Activated CD4-positive, alpha-beta memory T cell treated with anti-CD3 and anti-CD28 coated beads, Interleukin-2, amount 10 ng/mL, durations not matched to agents 7 days and 5 days (primary cell): ENCODE measurements at regions of chr6 and their contacts with region 1.

Region 1: DNA sequence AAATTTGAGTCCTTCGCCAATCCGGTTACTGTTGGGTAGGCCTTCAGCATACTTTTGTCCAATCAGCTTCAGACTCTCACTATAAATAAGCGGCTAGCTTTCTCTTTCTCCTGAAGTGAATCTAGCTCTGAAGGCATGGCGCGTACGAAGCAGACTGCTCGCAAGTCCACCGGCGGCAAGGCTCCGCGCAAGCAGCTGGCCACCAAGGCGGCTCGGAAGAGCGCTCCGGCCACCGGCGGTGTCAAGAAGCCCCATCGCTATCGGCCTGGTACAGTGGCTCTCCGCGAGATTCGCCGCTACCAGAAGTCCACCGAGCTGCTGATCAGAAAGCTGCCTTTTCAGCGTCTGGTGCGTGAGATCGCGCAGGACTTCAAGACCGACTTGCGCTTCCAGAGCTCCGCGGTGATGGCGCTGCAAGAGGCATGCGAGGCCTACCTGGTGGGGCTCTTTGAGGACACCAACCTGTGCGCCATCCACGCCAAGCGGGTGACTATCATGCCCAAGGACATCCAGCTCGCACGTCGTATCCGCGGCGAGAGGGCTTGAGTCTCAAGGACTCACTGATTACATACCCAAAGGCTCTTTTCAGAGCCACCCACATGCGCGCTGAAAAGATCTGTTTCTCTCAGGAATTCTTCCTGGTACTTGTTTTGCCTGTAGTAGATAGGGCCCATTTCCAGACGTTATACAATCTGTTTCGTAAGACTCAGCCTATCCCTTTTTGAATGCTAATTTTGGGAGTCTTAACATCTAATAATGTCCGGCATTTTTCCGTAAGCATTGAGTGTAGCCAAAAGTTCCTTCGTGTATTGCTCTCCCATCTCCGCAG is 102.0 kb downstream of the OR2B2 start:
- DNase-seq: peak; percentile 83
- H3K4me3 Mint-ChIP-seq: peak overlapping the region; percentile 85
- H3K27ac Mint-ChIP-seq: peak overlapping the region; percentile 99
- H3K4me1 Mint-ChIP-seq: peaks cover 62% of the 10 kb centered on the region
- H3K27me3 Mint-ChIP-seq: no peaks in the 10 kb centered on the region

Region 2: DNA sequence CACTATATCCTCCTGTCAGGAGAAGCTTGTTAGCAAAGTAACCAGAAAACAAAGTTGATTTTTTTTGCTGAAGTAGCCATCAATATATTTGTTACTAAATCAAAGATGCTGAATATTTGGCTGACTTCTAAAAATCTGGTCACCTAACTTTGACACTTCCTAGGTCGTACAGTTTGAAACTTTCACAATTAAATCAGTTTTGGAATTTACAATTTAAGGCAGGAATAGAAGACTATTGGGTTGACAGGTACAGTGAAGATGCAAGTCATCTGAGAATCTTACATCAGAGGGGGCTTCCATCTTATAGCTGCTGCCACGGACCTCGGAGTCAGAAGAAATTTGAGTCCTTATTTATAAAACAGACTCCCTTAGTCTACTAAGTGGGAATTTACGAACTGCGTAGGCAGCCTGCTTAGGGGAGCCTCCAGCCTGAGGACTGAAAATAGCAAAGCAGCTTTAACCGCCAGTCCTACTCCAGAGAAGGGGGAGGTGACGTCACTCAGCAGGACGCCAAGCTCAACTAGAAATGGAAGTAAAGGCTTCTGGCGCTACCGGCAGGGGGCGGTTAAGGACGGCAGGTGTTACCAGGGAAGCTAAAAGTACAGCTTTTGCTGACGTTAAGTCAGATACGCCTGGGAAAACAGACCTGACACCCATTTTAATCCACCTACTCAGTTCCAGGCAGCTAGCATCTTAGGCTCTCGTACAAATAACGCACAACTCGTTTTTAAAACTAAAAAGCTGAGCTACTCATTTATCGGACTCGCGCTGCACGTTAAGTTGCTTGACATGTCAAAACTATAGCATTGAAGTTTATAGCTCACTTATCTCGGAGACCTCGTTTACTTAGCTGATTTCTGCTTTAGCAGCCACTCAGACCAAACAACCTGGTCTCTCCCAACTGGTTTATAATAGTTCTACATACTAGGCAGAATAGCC is 1784.0 kb before region 1 on chr6:
- CTCF ChIA-PET with region 1: no interaction called
- POLR2A ChIA-PET with region 1: interaction called, 93 read pairs
- DNase-seq: peak; percentile 94
- H3K4me3 Mint-ChIP-seq: peak overlapping the region; percentile 75
- H3K27ac Mint-ChIP-seq: peak overlapping the region; percentile 100
- H3K4me1 Mint-ChIP-seq: peaks cover 84% of the 10 kb centered on the region
- H3K27me3 Mint-ChIP-seq: peaks cover 2% of the 10 kb centered on the region

Region 3: DNA sequence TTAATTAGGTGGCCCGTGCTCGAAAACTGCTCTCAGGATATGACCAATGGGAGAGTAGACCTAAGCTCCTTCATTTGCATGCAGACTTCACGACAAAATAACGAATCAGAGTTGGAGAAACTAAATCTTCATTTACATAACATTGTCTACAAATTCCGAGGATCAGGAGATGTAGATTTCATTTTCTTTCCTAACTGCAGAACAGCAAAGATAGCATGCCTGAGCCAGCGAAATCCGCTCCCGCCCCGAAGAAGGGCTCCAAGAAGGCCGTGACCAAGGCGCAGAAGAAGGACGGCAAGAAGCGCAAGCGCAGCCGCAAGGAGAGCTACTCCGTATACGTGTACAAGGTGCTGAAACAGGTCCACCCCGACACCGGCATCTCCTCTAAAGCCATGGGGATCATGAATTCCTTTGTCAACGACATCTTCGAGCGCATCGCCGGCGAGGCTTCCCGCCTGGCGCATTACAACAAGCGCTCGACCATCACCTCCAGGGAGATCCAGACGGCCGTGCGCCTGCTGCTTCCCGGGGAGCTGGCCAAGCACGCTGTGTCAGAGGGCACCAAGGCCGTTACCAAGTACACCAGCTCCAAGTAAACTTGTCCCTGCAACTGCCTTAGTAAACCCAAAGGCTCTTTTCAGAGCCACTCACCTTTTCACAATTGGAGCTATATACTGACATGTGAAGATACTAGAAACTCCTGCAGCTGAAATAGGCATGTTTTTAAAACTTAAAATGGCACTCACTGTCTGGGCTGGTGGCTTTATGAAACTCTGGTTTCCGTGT is 1626.4 kb before region 1 on chr6:
- CTCF ChIA-PET with region 1: no interaction called
- POLR2A ChIA-PET with region 1: interaction called, 14 read pairs
- DNase-seq: peak; percentile 78
- H3K4me3 Mint-ChIP-seq: peak overlapping the region; percentile 75
- H3K27ac Mint-ChIP-seq: peak overlapping the region; percentile 92
- H3K4me1 Mint-ChIP-seq: peaks cover 71% of the 10 kb centered on the region
- H3K27me3 Mint-ChIP-seq: no peaks in the 10 kb centered on the region

Region 4: DNA sequence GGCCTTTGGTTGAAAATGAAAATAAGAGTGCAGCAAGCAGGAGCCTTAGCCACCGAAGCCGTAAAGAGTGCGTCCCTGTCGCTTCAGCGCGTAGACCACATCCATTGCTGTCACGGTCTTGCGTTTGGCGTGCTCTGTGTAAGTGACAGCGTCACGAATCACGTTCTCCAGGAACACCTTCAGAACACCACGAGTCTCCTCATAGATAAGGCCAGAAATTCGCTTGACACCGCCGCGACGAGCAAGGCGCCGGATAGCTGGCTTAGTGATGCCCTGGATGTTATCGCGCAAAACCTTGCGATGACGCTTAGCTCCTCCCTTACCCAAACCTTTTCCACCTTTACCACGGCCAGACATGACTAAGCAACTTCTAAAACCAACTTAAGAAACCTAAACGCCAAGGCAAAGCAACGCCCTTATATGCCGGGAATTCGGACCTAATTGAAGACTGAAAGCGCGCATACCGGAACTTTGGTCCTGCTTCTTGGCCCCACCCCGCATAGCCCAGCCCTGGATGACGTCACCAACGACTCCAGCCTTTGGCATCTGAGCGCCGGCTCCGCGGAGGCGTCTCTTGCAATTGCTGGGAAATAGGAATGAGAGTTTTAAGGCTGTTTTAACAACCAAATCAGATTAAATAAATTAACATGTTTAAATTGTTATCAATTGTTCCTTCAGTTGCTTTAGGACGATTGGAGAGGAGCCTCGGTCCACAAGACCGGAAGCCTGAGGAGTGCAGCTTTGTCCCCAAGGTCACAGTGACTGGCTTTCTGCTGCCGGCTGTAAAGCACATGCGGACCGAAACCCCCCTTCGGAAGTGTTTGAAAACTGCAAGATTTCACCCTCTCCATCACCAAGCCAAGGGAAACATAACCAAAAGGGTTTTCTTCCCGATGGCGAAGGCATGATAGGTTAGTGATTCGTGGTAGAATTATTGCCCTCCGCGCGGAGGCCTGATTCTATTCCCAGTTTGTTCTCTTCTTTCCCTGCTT is 1524.7 kb before region 1 on chr6:
- CTCF ChIA-PET with region 1: no interaction called
- POLR2A ChIA-PET with region 1: interaction called, 33 read pairs
- DNase-seq: peak; percentile 98
- H3K4me3 Mint-ChIP-seq: peak overlapping the region; percentile 83
- H3K27ac Mint-ChIP-seq: peak overlapping the region; percentile 96
- H3K4me1 Mint-ChIP-seq: peaks cover 39% of the 10 kb centered on the region
- H3K27me3 Mint-ChIP-seq: peaks cover 4% of the 10 kb centered on the region

Region 5: DNA sequence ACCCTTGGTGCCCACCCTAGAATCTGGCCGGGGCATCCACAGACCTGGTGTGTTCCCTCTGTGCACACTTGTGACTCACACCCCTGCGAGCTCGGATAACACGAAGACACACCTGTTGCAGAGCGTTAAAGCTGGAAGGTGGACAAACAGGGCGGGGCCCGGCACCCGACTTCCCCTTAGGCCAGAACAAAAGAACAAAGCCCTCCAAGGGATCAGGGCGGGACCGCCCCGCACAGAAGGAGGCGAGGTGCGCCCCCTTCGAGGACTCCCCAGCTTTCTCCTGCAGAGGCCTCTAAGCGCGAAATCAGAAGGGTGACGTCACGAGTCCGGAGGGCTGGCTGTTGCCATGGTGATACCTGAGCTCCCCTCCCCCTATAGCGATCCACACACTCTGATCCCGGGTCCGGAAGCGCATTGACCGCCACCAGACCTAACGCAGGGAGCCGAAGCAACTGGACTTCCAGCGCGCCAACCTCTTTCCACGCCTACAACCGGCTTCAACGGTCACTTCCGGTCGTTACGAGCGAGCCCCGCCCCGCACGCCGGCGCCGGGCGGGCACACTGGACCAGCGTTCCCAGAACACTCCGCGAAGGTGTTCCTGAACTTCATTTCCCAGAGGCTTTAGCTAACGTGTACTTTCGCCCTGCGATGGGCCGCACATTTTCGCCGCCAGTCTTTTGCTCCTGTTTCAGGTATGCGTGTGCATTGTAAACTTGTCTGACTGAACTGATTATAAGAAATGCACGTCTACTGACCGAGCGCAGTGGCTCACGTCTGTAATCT is 337.3 kb before region 1 on chr6 and contains the start of gene ZNF184:
- CTCF ChIA-PET with region 1: interaction called, 3 read pairs
- POLR2A ChIA-PET with region 1: interaction called, 17 read pairs
- DNase-seq: peak; percentile 90
- H3K4me3 Mint-ChIP-seq: peak within 1 kb of the TSS; percentile 85
- H3K27ac Mint-ChIP-seq: peak within 1 kb of the TSS; percentile 93
- H3K4me1 Mint-ChIP-seq: peaks cover 52% of the 10 kb centered on the region
- H3K27me3 Mint-ChIP-seq: peaks cover 4% of the 10 kb centered on the region
- total RNA-seq, gene ZNF184: 16.2 to 16.3 TPM

Region 6: GRCh38 chr6:27825025-27825793 is 15.1 kb after region 1 on chr6:
- CTCF ChIA-PET with region 1: interaction called, 7 read pairs
- POLR2A ChIA-PET with region 1: interaction called, 803 read pairs
- DNase-seq: no peak
- H3K4me3 Mint-ChIP-seq: peak overlapping the region; percentile 82
- H3K27ac Mint-ChIP-seq: peak overlapping the region; percentile 99
- H3K4me1 Mint-ChIP-seq: peaks cover 51% of the 10 kb centered on the region
- H3K27me3 Mint-ChIP-seq: no peaks in the 10 kb centered on the region